ENCODE measurements at regions of chr6 and their contacts with region 1.

Region 1: DNA sequence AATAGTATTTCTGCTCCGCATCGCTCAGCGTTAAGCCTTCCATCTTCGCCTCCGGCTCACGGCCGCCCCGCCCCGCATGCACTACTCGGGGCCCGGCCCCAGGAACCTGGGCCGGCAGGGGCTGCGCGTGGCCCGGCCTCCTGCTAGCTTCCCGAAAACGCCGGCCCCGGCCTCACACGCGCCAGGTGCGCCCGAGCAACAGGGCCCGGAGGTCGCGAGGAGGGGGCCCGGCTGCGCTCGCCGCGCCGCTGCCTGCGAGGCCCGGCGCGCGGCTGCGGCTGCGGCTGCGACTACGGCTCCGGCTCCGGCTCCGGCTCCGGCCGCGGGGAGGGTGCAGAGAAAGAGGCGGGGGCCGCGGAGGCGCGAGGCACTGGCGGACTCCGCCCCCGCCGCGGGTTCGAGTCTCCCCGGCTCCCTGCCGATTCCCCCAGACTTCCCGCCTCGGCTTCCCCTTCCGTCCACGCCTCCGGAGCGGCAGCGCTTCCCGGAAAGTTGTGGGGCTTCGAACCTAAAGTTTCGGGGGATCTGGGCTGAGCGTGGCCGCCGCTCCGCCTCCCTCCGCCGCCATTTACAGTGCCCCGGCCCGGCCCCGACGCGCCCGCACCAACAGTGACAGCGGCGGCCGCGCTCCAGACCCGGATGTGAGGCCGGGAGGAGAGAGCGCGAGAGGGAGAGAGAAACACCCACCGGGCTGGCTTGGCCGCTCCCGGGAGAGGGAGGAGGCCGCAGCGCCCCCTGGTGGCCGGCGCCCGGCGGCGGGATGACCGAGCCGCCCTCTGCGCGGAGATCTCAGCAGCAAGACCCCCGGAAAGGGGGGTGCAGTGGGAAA is at the start of gene REPS1:
- DNase-seq: no peak
- H3K4me3 ChIP-seq: peak within 1 kb of the TSS; percentile 86
- CTCF ChIP-seq: peak; percentile 94

Region 2: DNA sequence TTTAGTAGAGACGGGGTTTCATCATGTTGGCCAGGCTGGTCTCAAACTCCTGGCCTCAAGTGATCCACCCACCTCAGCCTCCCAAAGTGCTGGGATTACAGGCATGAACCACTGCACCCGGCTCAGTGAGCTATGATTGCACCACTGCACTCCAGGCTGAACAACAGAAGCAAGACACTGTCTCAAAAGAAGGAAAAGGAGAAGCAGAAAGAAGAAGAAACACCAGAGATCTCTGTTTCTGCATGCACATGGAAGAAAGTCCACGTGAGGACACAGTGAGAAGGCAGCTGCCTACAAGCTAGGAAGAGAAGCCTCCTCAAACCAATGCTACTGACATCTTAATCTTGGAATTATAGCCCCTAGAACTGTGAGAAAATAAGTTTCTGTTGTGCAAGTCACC is 176.0 kb before region 1 on chr6:
- CTCF ChIA-PET with region 1: interaction called, 123 read pairs
- POLR2A ChIA-PET with region 1: no interaction called
- DNase-seq: no peak
- H3K4me3 ChIP-seq: no peak overlapping the region
- CTCF ChIP-seq: no peak

Region 3: DNA sequence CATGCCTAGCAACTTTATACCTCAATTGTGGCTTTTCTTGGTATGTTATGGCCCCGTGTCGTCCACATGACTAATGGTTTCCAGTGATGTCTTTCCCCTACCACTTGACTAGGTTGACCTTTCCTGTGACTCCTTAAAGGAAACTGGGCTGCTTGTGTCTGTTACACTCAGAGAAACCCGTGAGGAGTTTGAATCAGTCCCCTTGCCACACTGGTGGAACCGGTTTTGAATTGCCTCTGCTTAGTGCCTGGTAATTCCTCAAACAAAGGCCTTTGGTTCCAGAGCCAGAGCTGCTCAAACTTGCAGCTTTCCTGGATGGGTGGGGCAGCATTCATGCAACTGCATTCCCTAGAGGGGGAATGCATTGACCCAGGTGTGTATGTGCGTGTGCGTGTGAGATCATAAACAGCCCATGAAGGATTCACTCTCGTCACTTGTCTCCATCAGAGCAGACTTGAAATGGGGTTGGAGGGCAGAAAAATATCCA is 170.0 kb before region 1 on chr6:
- CTCF ChIA-PET with region 1: interaction called, 123 read pairs
- POLR2A ChIA-PET with region 1: no interaction called
- DNase-seq: peak; percentile 51
- H3K4me3 ChIP-seq: no peak overlapping the region
- CTCF ChIP-seq: no peak

Region 4: DNA sequence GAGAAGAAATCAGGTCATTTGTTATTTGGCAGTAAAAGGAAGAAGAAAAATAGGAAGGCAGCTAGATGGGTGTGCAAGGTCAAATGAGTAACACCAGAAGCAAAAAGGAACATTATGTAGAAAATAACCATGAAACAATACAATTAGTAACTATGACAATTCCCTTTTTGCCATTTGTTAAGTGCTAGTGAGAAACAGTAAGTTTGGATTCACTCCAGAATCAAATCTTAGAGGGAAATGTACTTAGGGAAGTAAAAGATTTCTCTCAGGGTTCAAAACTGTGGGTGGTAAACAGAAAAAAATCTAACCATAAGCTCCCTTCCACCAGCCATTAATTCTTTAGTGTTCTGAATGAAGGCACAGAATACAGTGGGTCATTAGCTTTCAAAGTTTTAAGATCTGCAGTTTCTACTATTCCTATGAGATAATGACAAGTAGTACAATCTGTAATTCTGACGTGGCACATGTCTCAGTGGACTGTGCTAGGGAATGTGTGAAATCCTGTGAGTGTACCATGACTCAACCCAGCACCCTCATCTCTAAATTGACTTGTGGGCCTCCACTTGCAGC is 16.9 kb before region 1 on chr6:
- CTCF ChIA-PET with region 1: interaction called, 62 read pairs
- POLR2A ChIA-PET with region 1: interaction called, 3 read pairs
- DNase-seq: peak; percentile 71
- H3K4me3 ChIP-seq: no peak overlapping the region
- CTCF ChIP-seq: no peak

Region 5: GRCh38 chr6:139003751-139004150 is 15.9 kb after region 1 on chr6:
- CTCF ChIA-PET with region 1: interaction called, 24 read pairs
- POLR2A ChIA-PET with region 1: no interaction called
- DNase-seq: no peak
- H3K4me3 ChIP-seq: no peak overlapping the region
- CTCF ChIP-seq: no peak

Region 6: DNA sequence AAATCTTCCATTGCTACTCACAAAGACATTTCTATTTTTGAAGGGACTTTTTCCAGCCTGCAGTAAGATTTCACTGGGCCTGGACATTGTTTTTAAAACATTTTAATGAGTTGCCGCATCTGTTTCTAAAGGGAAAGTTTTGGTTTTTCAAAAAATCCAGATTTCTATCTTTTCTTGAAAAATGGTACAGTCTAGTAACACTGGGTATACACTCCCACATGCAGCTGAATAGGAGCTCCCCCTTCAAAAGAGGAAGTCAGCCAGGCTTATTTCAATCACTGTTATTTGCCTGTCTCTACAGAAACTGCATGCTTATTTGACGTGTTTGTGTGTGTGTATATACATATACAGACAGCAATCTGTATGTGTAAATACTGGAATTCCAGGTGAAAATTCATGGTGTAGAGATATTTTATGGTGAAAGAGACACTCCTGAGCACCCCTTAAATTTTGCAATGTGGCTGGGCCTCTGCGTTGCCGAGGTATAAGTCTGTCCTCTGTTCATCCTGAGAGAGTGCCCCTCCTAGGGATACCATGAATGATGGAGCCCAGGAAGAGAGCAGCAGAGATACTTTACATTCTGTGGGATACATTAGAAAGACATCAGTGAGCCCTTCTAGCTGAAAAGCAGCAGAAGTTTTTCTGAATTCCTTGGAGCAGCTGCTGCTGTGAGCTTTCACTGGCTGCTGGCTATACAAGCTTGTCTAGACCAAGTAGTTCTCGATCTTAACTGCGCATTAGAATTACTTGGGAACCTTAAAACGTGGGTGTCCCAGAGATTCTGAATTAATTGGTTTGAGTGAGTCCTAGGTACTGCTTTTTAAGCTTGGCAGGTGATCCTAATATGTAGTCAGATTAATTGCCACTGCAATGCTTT is 28.7 kb after region 1 on chr6:
- CTCF ChIA-PET with region 1: interaction called, 19 read pairs
- POLR2A ChIA-PET with region 1: no interaction called
- DNase-seq: no peak
- H3K4me3 ChIP-seq: no peak overlapping the region
- CTCF ChIP-seq: no peak

Region 7: GRCh38 chr6:139027620-139028182 is 39.8 kb after region 1 on chr6:
- CTCF ChIA-PET with region 1: interaction called, 12 read pairs
- POLR2A ChIA-PET with region 1: no interaction called
- DNase-seq: no peak
- H3K4me3 ChIP-seq: peak overlapping the region; percentile 89
- CTCF ChIP-seq: no peak

Measured in AG04449 (cell line).